ENCODE measurements at regions of chr22 and their contacts with region 1.

Region 1: GRCh38 chr22:38201710-38202436 is at the start of gene MAFF:
- DNase-seq: peak; percentile 79 to 93 (median 85)
- H3K4me3 ChIP-seq: peak within 1 kb of the TSS; percentile 88
- H3K4me3 Mint-ChIP-seq: peak within 1 kb of the TSS; percentile 85 to 94 (median 89)
- H3K27ac ChIP-seq: peak within 1 kb of the TSS; percentile 92
- H3K27ac Mint-ChIP-seq: peak within 1 kb of the TSS; percentile 94 to 100 (median 99)
- H3K4me1 ChIP-seq: peaks cover 29% of the 10 kb centered on the region
- H3K4me1 Mint-ChIP-seq: peaks cover 33 to 37% (median 34%) of the 10 kb centered on the region in 3 donors
- H3K27me3 ChIP-seq: no peaks in the 10 kb centered on the region
- H3K27me3 Mint-ChIP-seq: no peaks in the 10 kb centered on the region
- total RNA-seq, gene MAFF: 7.4 to 7.8 TPM

Region 2: GRCh38 chr22:38114484-38115398 is 87.1 kb before region 1 on chr22:
- CTCF ChIA-PET with region 1: interaction called, 12 read pairs
- POLR2A ChIA-PET with region 1: no interaction called
- DNase-seq: peak; percentile 55 to 76 (median 62)
- H3K4me3 ChIP-seq: no peak overlapping the region
- H3K4me3 Mint-ChIP-seq: peak overlapping the region in 1 of 7 donors; percentile 78
- H3K27ac ChIP-seq: no peak overlapping the region
- H3K27ac Mint-ChIP-seq: peak overlapping the region in 4 of 8 donors; percentile 29 to 97 (median 76)
- H3K4me1 ChIP-seq: no peaks in the 10 kb centered on the region
- H3K4me1 Mint-ChIP-seq: peaks cover 4% of the 10 kb centered on the region in 3 donors
- H3K27me3 ChIP-seq: no peaks in the 10 kb centered on the region
- H3K27me3 Mint-ChIP-seq: no peaks in the 10 kb centered on the region

Region 3: DNA sequence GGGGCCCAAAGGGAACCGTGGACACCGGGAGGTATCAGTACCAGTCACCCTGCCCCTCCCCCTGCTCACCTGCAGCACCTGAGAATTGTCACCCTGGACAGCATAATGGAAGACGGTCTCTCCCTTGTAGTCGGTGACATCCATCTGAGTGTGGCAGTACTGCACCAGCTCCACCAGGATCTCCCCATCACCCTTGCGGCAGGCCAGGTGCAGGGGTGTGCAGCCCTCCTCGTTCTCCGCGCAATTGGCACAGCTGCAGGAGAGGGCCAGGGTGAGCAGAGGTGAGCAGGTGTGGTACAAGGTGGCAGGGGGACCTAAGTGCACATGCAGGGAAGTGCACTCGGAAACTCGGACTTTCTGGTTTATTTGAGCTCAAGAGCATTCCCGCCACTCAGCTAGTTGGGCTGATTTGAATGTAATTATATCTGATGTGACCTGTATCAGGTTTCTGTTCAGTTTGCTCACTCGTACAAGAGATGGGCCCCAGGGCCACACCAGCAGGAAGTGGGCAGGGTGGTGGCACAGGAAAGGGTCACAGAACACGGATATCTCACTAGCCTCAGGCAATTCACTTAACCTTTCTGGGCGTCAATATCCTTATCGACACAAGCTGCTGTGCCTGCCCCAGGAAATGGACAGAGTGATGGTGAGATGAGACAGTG is 58.7 kb before region 1 on chr22:
- CTCF ChIA-PET with region 1: no interaction called
- POLR2A ChIA-PET with region 1: no interaction called
- DNase-seq: peak in 1 of 5 donors; percentile 45
- H3K4me3 ChIP-seq: no peak overlapping the region
- H3K4me3 Mint-ChIP-seq: peak overlapping the region in 4 of 7 donors; percentile 26 to 77 (median 48)
- H3K27ac ChIP-seq: no peak overlapping the region
- H3K27ac Mint-ChIP-seq: peak overlapping the region; percentile 18 to 92 (median 85)
- H3K4me1 ChIP-seq: peaks cover 7% of the 10 kb centered on the region
- H3K4me1 Mint-ChIP-seq: peaks cover 17 to 24% (median 22%) of the 10 kb centered on the region in 3 donors
- H3K27me3 ChIP-seq: no peaks in the 10 kb centered on the region
- H3K27me3 Mint-ChIP-seq: no peaks in the 10 kb centered on the region

Region 4: DNA sequence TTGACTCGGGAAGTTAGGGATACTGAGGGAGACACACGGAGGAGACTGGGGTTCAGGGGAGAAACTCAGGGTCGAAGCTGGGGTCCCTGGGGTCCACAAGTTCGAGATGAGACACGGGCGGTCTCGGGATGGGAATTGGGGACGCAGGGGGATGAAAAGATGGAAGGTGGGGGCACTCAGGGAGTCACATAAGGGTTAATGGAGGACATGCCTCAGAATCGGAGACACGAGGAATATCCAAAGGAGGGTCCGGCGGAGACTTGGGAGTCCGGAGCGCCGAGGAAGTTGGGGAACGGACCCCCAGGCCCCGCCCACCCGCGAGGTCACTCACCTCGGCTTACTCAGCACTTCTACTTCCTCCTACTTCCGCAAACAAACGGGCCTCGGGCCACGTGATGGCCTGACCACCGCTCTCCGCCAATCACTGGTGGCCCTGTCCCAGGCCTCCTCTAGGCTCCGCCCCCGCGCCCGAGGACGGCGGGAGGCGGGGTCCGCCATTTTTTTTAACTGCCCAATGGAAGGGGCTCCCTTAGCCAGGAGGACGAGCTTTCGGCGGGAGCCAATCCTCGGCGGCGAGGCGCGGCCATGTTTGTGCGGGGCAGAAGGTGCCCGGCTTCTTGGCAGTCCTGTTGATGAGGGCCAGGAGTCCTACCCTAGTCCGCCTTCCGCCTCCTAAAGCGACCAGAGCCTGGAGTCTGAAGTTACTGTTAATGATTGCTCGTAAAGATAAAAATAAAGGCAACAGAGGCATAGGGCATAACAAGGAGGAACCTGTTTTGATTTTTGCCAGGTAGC is 20.2 kb before region 1 on chr22 and contains the start of gene PLA2G6:
- CTCF ChIA-PET with region 1: interaction called, 9 read pairs
- POLR2A ChIA-PET with region 1: interaction called, 29 read pairs
- DNase-seq: peak; percentile 91 to 96 (median 94)
- H3K4me3 ChIP-seq: peak within 1 kb of the TSS; percentile 85
- H3K4me3 Mint-ChIP-seq: peak within 1 kb of the TSS; percentile 89 to 99 (median 93)
- H3K27ac ChIP-seq: peak within 1 kb of the TSS; percentile 89
- H3K27ac Mint-ChIP-seq: peak within 1 kb of the TSS; percentile 90 to 98 (median 95)
- H3K4me1 ChIP-seq: peaks cover 28% of the 10 kb centered on the region
- H3K4me1 Mint-ChIP-seq: peaks cover 41 to 53% (median 51%) of the 10 kb centered on the region in 3 donors
- H3K27me3 ChIP-seq: no peaks in the 10 kb centered on the region
- H3K27me3 Mint-ChIP-seq: no peaks in the 10 kb centered on the region
- total RNA-seq, gene PLA2G6: 33.0 to 34.1 TPM

Region 5: DNA sequence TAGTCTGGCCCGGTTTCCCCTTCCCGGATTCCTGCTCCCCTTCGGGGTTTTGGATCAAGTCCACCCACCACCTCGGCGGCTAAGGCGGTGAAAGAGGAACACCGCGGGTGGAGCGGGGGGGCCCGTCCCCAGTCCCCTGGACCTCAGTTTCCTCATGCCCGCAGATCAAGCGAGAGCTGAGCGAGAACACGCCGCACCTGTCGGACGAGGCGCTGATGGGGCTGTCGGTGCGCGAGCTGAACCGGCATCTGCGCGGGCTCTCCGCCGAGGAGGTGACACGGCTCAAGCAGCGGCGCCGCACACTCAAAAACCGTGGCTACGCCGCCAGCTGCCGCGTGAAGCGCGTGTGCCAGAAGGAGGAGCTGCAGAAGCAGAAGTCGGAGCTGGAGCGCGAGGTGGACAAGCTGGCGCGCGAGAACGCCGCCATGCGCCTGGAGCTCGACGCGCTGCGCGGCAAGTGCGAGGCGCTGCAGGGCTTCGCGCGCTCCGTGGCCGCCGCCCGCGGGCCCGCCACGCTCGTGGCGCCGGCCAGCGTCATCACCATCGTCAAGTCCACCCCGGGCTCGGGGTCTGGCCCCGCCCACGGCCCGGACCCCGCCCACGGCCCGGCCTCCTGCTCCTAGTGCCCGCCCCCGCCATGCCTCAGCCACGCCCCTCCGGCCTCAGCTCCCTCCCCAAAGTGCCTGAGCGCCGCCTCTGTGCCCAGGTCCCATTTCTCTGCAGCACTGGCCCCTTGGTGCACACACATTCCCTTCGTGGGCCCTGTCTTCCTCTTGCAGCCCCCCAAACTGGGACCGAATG is 12.6 kb after region 1 on chr22:
- CTCF ChIA-PET with region 1: interaction called, 10 read pairs
- POLR2A ChIA-PET with region 1: interaction called, 11 read pairs
- DNase-seq: peak; percentile 67 to 83 (median 70)
- H3K4me3 ChIP-seq: peak overlapping the region; percentile 26
- H3K4me3 Mint-ChIP-seq: peak overlapping the region; percentile 23 to 71 (median 55)
- H3K27ac ChIP-seq: no peak overlapping the region
- H3K27ac Mint-ChIP-seq: peak overlapping the region in 5 of 8 donors; percentile 57 to 84 (median 76)
- H3K4me1 ChIP-seq: peaks cover 14% of the 10 kb centered on the region
- H3K4me1 Mint-ChIP-seq: peaks cover 25 to 45% (median 29%) of the 10 kb centered on the region in 3 donors
- H3K27me3 ChIP-seq: no peaks in the 10 kb centered on the region
- H3K27me3 Mint-ChIP-seq: peaks cover 0 to 2% of the 10 kb centered on the region in 2 donors